Gastrocnemius medialis (tissue), 4 donors: ENCODE measurements at regions of chr17 and their contacts with region 1.

Region 1: GRCh38 chr17:50169121-50169764 is 3.4 kb downstream of the SGCA start:
- DNase-seq: no peak
- ATAC-seq: no peak
- H3K4me3 ChIP-seq: no peak overlapping the region
- H3K27ac ChIP-seq: peak overlapping the region; percentile 98 to 100 (median 99)
- H3K4me1 ChIP-seq: peaks cover 70 to 76% of the 10 kb centered on the region in 2 donors
- H3K27me3 ChIP-seq: no peaks in the 10 kb centered on the region
- CTCF ChIP-seq: peak; percentile 57 to 91 (median 80)
- POLR2A ChIP-seq: peak in 1 of 2 donors; percentile 4

Region 2: GRCh38 chr17:50020841-50021599 is 148.2 kb before region 1 on chr17:
- in situ Hi-C with region 1: no loop called
- intact Hi-C with region 1: no loop called
- DNase-seq: no peak
- ATAC-seq: no peak
- H3K4me3 ChIP-seq: no peak overlapping the region
- H3K27ac ChIP-seq: no peak overlapping the region
- H3K4me1 ChIP-seq: no peaks in the 10 kb centered on the region
- H3K27me3 ChIP-seq: no peaks in the 10 kb centered on the region
- CTCF ChIP-seq: no peak
- POLR2A ChIP-seq: no peak

Region 3: GRCh38 chr17:50129728-50130558 is 39.3 kb before region 1 on chr17 and contains the start of gene SAMD14:
- in situ Hi-C with region 1: no loop called
- intact Hi-C with region 1: loop called (anchors 5 kb)
- DNase-seq: no peak
- ATAC-seq: no peak
- H3K4me3 ChIP-seq: peak within 1 kb of the TSS; percentile 52 to 64 (median 54)
- H3K27ac ChIP-seq: peak within 1 kb of the TSS; percentile 53 to 95 (median 92)
- H3K4me1 ChIP-seq: peaks cover 30 to 46% of the 10 kb centered on the region in 2 donors
- H3K27me3 ChIP-seq: peaks cover 0 to 4% (median 0%) of the 10 kb centered on the region in 3 donors
- CTCF ChIP-seq: no peak
- POLR2A ChIP-seq: no peak
- total RNA-seq, gene SAMD14: 0.04 to 3.8 (median 0.31) TPM in 3 of 4 donors, not detected in the other

Region 4: DNA sequence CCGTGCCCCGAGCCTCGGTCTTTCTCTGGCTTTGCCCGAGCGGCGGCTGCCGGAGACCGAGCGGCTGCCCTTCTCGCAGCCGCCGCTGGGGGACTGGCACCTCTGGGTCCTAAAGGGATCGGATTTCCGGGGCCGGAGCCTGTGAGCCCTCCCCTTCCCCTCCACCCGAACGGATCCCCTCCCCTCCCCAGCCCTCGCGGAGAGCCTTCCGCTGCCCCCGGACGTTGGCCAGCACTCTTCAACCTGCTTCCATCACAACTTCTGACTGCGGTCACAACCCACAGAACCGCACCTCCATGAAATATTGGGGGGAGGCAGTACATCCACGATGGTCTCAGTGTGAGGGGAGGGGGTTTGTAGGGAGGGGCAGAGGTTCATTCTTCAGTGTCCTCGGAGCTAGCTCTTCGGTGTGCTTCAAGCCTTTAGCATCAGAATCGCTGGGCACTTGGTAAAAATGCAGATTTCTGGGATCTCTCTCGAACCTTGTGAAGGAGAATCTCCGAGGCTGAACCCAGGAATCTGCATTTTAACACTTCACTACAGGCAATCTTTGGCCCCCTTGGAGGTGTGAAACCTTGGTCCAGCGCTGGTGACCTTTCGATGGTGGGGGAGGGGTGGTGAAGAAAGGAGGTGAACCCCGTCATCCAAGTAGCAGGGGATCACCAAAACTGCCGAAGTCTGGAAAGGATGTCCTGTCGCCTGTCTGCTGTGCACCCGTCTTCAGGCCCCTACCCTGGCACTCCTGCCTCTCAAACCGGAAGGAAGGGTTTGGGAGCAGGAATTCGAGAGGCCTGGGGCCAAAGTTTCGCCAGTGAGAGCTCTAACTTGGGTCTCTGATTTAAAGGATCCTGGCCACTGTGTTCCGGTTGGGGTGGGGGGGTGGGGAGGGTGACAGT is 18.0 kb before region 1 on chr17:
- in situ Hi-C with region 1: no loop called
- intact Hi-C with region 1: no loop called
- DNase-seq: peak; percentile 82 to 86
- ATAC-seq: peak; percentile 58 to 59
- H3K4me3 ChIP-seq: peak overlapping the region; percentile 76 to 95 (median 84)
- H3K27ac ChIP-seq: peak overlapping the region; percentile 85 to 93 (median 91)
- H3K4me1 ChIP-seq: peaks cover 56 to 64% of the 10 kb centered on the region in 2 donors
- H3K27me3 ChIP-seq: no peaks in the 10 kb centered on the region
- CTCF ChIP-seq: peak; percentile 62 to 92 (median 72)
- POLR2A ChIP-seq: peak; percentile 48 to 50